GM12878 (cell line): ENCODE measurements at regions of chr1 and their contacts with region 1.

Region 1: DNA sequence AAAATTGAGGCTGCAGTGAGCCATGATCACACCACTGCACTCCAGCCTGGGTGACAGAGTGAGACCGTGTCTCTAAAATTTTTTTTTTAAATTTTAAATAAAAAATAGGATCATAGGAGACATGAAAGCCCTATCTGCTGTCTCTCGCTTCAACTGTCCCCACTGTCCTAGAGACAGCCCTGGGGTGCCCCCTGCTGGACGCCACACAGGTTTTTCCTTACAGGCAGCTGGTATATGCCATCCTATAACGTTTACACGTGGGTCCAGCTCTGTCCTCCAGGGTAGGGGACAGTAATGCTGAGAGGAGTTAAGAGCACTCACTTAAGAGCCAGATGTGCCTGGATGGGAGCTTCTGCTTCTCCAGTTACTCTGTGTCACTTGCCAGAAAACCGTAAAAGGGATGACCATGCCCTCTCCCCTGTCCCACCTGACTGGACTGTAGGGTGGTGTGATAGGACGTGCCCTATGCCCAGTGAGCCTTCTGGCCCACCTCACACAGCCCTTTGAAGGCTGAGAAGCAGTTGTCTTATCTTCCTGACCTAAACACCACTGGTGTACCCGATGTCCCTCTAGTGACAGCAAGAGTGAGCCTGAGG is 8.5 kb downstream of the FBXO2 start:
- DNase-seq: no peak
- ATAC-seq: peak; percentile 79
- H3K4me3 ChIP-seq: no peak overlapping the region
- H3K27ac ChIP-seq: no peak overlapping the region
- H3K4me1 ChIP-seq: no peaks in the 10 kb centered on the region
- H3K27me3 ChIP-seq: no peaks in the 10 kb centered on the region; a peak in 2 of 4 replicates
- CTCF ChIP-seq: peak; percentile 73 to 85 (median 78)
- EP300 ChIP-seq: no peak
- POLR2A ChIP-seq: no peak
- RAD21 ChIP-seq: peak; percentile 73

Region 2: GRCh38 chr1:11248155-11248554 is 397.6 kb before region 1 on chr1:
- CTCF ChIA-PET with region 1: interaction called, 47 read pairs
- POLR2A ChIA-PET with region 1: no interaction called
- RAD21 ChIA-PET with region 1: interaction called, 6 read pairs
- SMC1A ChIA-PET with region 1: interaction called, 4 read pairs
- in situ Hi-C with region 1: no loop called
- intact Hi-C with region 1: no loop called
- DNase-seq: no peak
- ATAC-seq: no peak
- H3K4me3 ChIP-seq: no peak overlapping the region
- H3K27ac ChIP-seq: no peak overlapping the region
- H3K4me1 ChIP-seq: no peaks in the 10 kb centered on the region
- H3K27me3 ChIP-seq: no peaks in the 10 kb centered on the region
- CTCF ChIP-seq: 0 out of 6 replicates have a peak, but pooled peaks of 1 of the 3 experiments have one; percentile 11
- EP300 ChIP-seq: no peak
- POLR2A ChIP-seq: no peak
- RAD21 ChIP-seq: no peak

Region 3: GRCh38 chr1:11335417-11336056 is 310.2 kb before region 1 on chr1:
- CTCF ChIA-PET with region 1: interaction called, 4 read pairs
- POLR2A ChIA-PET with region 1: no interaction called
- RAD21 ChIA-PET with region 1: interaction called, 3 read pairs
- SMC1A ChIA-PET with region 1: no interaction called
- in situ Hi-C with region 1: no loop called
- intact Hi-C with region 1: loop called (anchors 1 kb)
- DNase-seq: peak; percentile 72
- ATAC-seq: peak; percentile 96
- H3K4me3 ChIP-seq: no peak overlapping the region
- H3K27ac ChIP-seq: no peak overlapping the region; the same call in 1 of the 2 replicates
- H3K4me1 ChIP-seq: peaks cover 16% of the 10 kb centered on the region
- H3K27me3 ChIP-seq: peaks cover 0 to 3% of the 10 kb centered on the region in 2 experiments; a peak in 2 of 4 replicates
- CTCF ChIP-seq: no peak
- EP300 ChIP-seq: peak; percentile 21 to 67; a peak in 2 of 4 replicates
- POLR2A ChIP-seq: no peak
- RAD21 ChIP-seq: no peak

Region 4: DNA sequence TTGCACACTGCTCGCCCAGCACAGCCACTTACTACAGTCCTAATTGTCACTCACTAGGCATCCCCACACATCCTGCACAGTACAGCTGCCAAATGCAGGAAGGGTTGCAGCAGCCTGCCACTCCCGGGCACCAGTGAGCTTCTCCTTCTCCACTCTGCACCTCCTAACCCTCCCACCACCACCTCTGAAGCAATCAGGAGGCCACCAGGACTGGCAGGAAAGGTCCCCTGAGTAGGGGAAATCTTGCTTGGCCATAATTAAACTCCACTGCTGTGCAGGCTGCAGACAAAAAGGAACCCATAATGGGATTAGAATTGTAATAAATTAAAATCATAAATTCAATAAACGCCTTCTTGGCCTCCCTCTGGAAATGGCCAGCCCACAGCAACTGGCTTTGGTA is 23.4 kb before region 1 on chr1:
- CTCF ChIA-PET with region 1: no interaction called
- POLR2A ChIA-PET with region 1: no interaction called
- RAD21 ChIA-PET with region 1: no interaction called
- SMC1A ChIA-PET with region 1: no interaction called
- in situ Hi-C with region 1: no loop called
- intact Hi-C with region 1: no loop called
- DNase-seq: no peak
- ATAC-seq: no peak
- H3K4me3 ChIP-seq: no peak overlapping the region
- H3K27ac ChIP-seq: no peak overlapping the region
- H3K4me1 ChIP-seq: no peaks in the 10 kb centered on the region
- H3K27me3 ChIP-seq: peaks cover 0 to 1% of the 10 kb centered on the region in 2 experiments; a peak in 2 of 4 replicates
- CTCF ChIP-seq: no peak
- EP300 ChIP-seq: no peak
- POLR2A ChIP-seq: no peak
- RAD21 ChIP-seq: no peak

Region 5: DNA sequence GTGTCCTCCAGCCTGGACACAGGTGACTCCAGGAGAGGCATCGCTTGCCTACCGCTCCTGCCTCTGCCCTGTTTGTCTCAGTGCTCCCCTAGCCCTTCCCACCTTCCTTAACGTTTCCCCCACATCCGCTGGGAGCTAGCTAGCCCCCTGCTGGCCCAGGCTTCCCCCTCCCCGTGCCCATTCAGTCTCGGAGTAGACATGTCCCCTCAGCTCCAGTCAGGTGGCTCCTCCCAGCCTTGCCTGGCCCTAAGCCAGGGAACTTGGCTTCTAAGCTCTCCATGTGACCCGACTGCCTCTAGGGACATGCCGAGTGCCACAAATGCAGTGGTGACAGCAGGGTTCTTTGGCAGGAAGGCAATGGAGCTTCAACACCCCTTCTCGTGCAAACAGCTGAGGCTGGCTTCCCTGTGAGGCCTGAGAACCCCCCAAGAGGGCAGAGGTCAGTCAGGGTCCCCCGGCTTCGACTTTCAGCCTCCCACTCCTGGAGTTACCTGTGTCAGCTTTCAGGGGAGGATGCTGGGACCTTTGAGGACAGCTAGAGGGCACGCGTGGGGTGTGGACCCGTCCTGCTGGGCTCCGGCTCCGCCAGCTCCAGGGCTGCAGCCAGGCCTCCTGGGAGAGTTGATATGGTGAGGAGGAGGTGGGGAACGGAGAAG is 62.0 kb after region 1 on chr1:
- CTCF ChIA-PET with region 1: interaction called, 6 read pairs
- POLR2A ChIA-PET with region 1: interaction called, 3 read pairs
- RAD21 ChIA-PET with region 1: interaction called, 17 read pairs
- SMC1A ChIA-PET with region 1: interaction called, 3 read pairs
- in situ Hi-C with region 1: no loop called
- intact Hi-C with region 1: no loop called
- DNase-seq: no peak
- ATAC-seq: peak; percentile 33
- H3K4me3 ChIP-seq: no peak overlapping the region
- H3K27ac ChIP-seq: no peak overlapping the region
- H3K4me1 ChIP-seq: no peaks in the 10 kb centered on the region; the same call in 1 of the 2 replicates
- H3K27me3 ChIP-seq: peaks cover 2 to 7% of the 10 kb centered on the region in 2 experiments
- CTCF ChIP-seq: no peak
- EP300 ChIP-seq: no peak
- POLR2A ChIP-seq: no peak
- RAD21 ChIP-seq: no peak

Region 6: DNA sequence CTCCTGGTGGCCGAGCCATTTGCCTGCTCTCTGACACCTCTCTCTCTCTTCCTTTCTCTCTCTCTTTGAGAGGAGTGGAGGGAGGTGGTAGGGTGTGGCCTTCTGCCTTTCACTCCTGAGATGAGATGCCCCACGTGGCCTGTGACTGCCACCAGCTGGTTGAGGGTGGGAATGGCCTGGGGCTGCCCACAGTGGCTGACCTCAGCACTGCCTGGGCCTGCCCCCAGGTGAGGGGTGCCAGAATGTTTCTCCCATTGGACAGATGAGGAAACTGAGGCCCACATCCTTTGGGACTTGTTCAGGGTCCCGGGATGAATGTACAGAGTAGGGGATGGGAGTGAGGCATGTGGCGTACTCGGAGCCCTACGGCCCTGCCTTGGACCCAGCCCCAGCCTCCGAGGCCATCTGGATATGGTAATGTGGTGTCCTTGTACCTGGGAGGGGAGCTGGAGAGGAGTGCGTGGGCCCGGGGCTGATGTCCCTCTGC is 103.5 kb after region 1 on chr1:
- CTCF ChIA-PET with region 1: interaction called, 3 read pairs
- POLR2A ChIA-PET with region 1: no interaction called
- RAD21 ChIA-PET with region 1: interaction called, 3 read pairs
- SMC1A ChIA-PET with region 1: no interaction called
- in situ Hi-C with region 1: no loop called
- intact Hi-C with region 1: loop called (anchors 1 kb)
- DNase-seq: no peak
- ATAC-seq: peak; percentile 100
- H3K4me3 ChIP-seq: no peak overlapping the region
- H3K27ac ChIP-seq: no peak overlapping the region
- H3K4me1 ChIP-seq: 0 out of 2 replicates have a peak, but pooled peaks cover 4% of the 10 kb centered on the region
- H3K27me3 ChIP-seq: no peaks in the 10 kb centered on the region
- CTCF ChIP-seq: peak; percentile 71 to 78 (median 73)
- EP300 ChIP-seq: no peak
- POLR2A ChIP-seq: no peak
- RAD21 ChIP-seq: peak; percentile 76

Region 7: GRCh38 chr1:11944358-11944931 is 298.7 kb after region 1 on chr1:
- CTCF ChIA-PET with region 1: no interaction called
- POLR2A ChIA-PET with region 1: no interaction called
- RAD21 ChIA-PET with region 1: no interaction called
- SMC1A ChIA-PET with region 1: no interaction called
- in situ Hi-C with region 1: no loop called
- intact Hi-C with region 1: no loop called
- DNase-seq: no peak
- ATAC-seq: no peak
- H3K4me3 ChIP-seq: no peak overlapping the region
- H3K27ac ChIP-seq: no peak overlapping the region
- H3K4me1 ChIP-seq: no peaks in the 10 kb centered on the region
- H3K27me3 ChIP-seq: no peaks in the 10 kb centered on the region
- CTCF ChIP-seq: no peak
- EP300 ChIP-seq: no peak
- POLR2A ChIP-seq: no peak
- RAD21 ChIP-seq: no peak